Aorta (tissue), 5 donors: ENCODE measurements at regions of chr9 and their contacts with region 1.

Region 1: GRCh38 chr9:108953983-108954574 is 19.9 kb downstream of the ABITRAM start:
- DNase-seq: no peak
- ATAC-seq: peak; percentile 69
- H3K4me3 ChIP-seq: no peak overlapping the region
- H3K27ac ChIP-seq: no peak overlapping the region
- H3K4me1 ChIP-seq: no peaks in the 10 kb centered on the region
- H3K27me3 ChIP-seq: no peaks in the 10 kb centered on the region

Region 2: DNA sequence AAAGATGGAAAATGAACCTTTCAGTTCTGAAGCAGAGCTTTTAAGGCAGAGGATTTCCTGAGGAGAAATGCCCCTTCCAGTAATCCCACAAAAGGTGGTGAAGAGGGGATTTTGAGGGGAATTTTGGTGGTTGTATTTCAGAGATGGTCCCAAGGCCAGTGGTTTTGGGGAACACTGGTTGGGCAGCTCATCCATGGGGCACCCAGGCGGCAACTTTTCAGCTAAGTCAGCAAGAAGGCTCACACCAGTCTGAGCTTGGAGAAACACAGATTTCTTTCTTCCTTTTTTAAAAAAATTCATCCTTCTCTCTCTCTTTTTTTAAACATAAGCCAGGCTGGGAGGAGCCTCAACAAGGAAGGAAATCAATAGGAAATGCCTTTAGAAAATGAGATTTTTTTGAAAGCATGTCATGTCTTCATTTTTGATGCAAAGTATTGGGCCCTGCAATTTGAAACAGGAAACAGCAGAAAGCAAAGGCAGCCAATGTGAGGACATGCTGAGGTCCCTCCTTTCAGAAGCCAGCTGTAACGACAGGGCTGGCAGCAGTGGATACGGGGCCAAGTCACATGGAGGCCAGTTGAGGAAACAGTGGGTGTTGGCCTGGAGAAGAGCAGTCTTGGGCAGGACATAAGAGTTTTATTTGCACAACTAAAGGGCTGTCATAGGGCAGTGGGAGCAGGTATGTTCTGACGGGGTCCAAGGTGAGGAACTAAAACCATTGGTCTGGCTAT is 1309.2 kb before region 1 on chr9:
- intact Hi-C with region 1: loop called in 1 of 2 experiments (anchors 5 kb)
- DNase-seq: peak in 1 of 2 donors; percentile 88
- ATAC-seq: peak; percentile 73
- H3K4me3 ChIP-seq: no peak overlapping the region
- H3K27ac ChIP-seq: no peak overlapping the region
- H3K4me1 ChIP-seq: no peaks in the 10 kb centered on the region
- H3K27me3 ChIP-seq: no peaks in the 10 kb centered on the region

Region 3: DNA sequence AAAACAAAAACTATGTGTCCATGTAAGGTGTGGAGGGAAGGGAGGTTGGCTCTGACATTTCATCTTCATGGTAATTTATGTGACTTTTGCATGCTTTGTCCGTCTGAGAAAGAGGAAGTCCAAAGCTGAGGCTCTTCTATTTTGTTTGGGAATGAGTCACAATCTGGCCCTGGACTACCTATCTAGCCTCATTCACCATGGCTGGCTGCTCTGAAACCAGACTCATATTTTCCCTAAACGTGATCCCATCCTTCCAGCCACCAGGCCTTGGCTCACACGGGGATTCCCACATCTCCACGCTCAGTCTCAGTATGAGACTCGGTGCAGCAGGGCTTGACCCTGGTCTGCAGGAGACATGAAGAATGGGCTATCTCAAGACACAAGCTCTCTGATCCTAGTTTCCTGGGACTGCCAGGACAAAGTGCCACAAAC is 771.1 kb before region 1 on chr9:
- intact Hi-C with region 1: loop called in 1 of 2 experiments (anchors 10 kb)
- DNase-seq: peak in 1 of 2 donors; percentile 54
- ATAC-seq: no peak
- H3K4me3 ChIP-seq: no peak overlapping the region
- H3K27ac ChIP-seq: no peak overlapping the region
- H3K4me1 ChIP-seq: peaks cover 0 to 3% of the 10 kb centered on the region in 2 donors
- H3K27me3 ChIP-seq: no peaks in the 10 kb centered on the region